Motor neuron (in vitro differentiated cells): ENCODE measurements at regions of chr9 and their contacts with region 1.

Region 1: DNA sequence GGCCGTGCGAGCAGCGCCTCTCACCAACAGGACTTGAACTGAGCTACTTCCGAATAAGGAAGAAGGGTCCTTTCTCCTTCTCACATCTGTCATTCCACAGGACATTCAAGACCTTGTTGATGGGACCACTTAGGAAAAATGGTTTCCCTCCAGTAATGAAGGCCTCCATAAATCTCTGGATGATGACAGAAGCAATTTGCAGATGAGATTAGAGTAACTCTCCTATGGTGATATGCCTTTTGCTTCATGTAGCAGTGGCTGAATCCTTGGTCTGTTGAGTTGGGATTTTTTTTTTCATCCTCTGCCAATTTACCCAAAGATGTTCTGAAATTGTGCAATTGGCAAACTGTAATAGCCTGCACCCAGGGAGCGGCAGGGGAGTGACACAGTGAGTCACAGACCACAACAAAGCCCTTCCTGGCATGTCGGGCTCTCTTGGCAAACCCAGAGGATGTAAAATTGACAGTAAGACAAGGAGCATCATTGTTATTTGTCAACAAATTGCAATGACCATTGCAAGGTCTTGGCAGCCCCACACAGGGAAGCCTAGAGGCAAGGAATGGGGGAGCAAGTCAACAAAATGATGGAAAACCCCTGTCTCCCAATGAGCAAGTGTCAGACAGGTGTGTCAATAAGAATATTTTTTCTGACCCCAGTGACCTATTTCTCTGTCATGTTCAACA is 275.9 kb downstream of the ACTL7B start:
- ATAC-seq: peak in 6 of 8 experiments; percentile 15 to 96 (median 84)
- H3K4me3 ChIP-seq: no peak overlapping the region
- H3K27ac ChIP-seq: no peak overlapping the region
- H3K4me1 ChIP-seq: no peaks in the 10 kb centered on the region

Region 2: GRCh38 chr9:108671176-108671575 is 91.3 kb after region 1 on chr9:
- in situ Hi-C with region 1: no loop called
- ATAC-seq: peak in 3 of 8 experiments; percentile 21 to 57 (median 23)
- H3K4me3 ChIP-seq: no peak overlapping the region
- H3K27ac ChIP-seq: no peak overlapping the region
- H3K4me1 ChIP-seq: no peaks in the 10 kb centered on the region

Region 3: DNA sequence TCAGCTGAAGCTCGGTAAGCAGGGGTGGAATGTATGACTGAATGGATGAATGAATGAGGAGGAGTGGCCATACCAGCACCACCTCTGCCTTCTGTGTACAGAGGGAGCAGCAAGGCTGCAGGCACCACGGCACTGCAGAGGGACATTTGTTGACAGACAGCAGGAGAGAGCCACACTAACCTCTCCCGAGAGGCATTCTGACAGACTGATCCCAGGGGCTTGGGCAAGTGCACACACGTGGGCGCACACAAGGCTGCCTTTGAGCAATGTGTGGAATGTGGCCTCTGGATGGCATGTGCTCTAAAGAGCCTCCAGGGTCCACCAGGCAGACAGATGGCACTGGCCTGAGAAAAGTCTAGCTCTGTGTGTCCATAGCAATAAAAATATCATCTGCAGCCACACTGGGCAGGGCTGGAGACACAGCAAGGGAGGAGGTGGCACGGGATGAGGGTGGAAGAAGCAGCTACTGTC is 164.0 kb after region 1 on chr9:
- in situ Hi-C with region 1: loop called in 1 of 9 experiments (anchors 25 kb)
- ATAC-seq: peak in 7 of 8 experiments; percentile 42 to 97 (median 53)
- H3K4me3 ChIP-seq: no peak overlapping the region
- H3K27ac ChIP-seq: no peak overlapping the region
- H3K4me1 ChIP-seq: no peaks in the 10 kb centered on the region